Activated CD4-positive, alpha-beta T cell treated with anti-CD3 and anti-CD28 coated beads, Interleukin-2, amount 10 ng/mL, durations not matched to agents 7 days and 5 days (primary cell): ENCODE measurements at regions of chr3 and their contacts with region 1.

Region 1: GRCh38 chr3:196609343-196609775 is 30.1 kb upstream of the NRROS start:
- DNase-seq: peak; percentile 97
- H3K4me3 Mint-ChIP-seq: peak overlapping the region; percentile 60
- H3K27ac Mint-ChIP-seq: peak overlapping the region; percentile 88
- H3K4me1 Mint-ChIP-seq: peaks cover 54% of the 10 kb centered on the region
- H3K27me3 Mint-ChIP-seq: no peaks in the 10 kb centered on the region

Region 2: GRCh38 chr3:196620161-196620604 is 10.8 kb after region 1 on chr3:
- CTCF ChIA-PET with region 1: interaction called, 11 read pairs
- POLR2A ChIA-PET with region 1: no interaction called
- DNase-seq: no peak
- H3K4me3 Mint-ChIP-seq: no peak overlapping the region
- H3K27ac Mint-ChIP-seq: peak overlapping the region; percentile 83
- H3K4me1 Mint-ChIP-seq: peaks cover 57% of the 10 kb centered on the region
- H3K27me3 Mint-ChIP-seq: no peaks in the 10 kb centered on the region

Region 3: DNA sequence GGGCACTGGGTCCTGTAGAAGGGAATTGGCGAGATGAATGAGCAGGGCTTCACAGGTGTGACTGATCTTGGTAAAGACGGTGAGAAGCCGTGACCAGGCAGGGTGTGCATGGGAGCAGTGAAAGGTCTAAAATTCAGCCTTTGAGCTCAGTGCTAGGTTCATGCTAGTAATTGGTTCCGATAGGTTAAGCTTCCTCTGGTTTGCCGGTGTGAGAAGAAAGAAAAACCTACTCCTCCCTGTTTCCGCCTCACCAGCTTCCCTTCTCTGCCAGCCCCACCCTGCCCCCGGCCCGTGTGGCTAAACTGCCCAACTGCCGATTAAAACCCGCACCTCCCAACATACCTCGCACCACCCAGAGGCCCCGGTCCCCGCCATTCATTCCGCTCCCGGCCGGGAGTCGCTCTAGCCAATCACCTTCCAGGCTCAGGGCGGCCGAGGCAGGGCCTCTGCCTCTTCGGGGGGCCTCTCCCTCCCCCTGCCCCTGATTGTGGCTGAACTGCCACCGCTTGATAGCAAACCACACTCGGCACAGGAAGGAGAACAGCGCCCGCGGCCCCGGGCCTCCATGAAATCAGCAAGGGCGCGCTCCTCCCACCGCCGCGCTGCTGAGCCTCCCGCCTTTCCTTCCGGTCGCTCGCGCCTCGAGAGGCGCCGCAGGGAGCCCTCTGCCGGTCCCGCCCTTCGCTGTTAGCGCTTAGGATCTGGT is 22.8 kb after region 1 on chr3:
- CTCF ChIA-PET with region 1: interaction called, 24 read pairs
- POLR2A ChIA-PET with region 1: interaction called, 9 read pairs
- DNase-seq: peak; percentile 96
- H3K4me3 Mint-ChIP-seq: peak overlapping the region; percentile 75
- H3K27ac Mint-ChIP-seq: peak overlapping the region; percentile 97
- H3K4me1 Mint-ChIP-seq: peaks cover 73% of the 10 kb centered on the region
- H3K27me3 Mint-ChIP-seq: no peaks in the 10 kb centered on the region

Region 4: DNA sequence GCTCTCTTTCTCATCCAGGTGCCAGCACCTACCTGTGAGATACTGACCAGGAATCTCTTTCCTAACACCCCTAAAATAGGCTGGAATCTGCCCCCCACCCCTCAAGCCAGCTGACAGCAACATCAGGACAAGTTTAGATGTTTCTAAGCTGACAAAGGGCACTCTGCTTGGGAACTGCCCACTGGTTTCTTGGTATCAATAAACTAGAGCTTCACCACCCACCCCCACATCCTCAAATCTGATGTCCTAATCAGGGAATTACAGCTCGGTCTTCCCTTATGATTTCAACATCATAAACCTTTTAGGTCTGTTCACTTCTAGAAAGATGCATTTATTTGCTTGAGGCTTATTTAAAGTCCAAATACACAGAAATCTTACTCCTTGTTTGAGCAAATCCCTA is 68.0 kb after region 1 on chr3:
- CTCF ChIA-PET with region 1: interaction called, 11 read pairs
- POLR2A ChIA-PET with region 1: no interaction called
- DNase-seq: no peak
- H3K4me3 Mint-ChIP-seq: no peak overlapping the region
- H3K27ac Mint-ChIP-seq: peak overlapping the region; percentile 32
- H3K4me1 Mint-ChIP-seq: peaks cover 22% of the 10 kb centered on the region
- H3K27me3 Mint-ChIP-seq: peaks cover 2% of the 10 kb centered on the region

Region 5: DNA sequence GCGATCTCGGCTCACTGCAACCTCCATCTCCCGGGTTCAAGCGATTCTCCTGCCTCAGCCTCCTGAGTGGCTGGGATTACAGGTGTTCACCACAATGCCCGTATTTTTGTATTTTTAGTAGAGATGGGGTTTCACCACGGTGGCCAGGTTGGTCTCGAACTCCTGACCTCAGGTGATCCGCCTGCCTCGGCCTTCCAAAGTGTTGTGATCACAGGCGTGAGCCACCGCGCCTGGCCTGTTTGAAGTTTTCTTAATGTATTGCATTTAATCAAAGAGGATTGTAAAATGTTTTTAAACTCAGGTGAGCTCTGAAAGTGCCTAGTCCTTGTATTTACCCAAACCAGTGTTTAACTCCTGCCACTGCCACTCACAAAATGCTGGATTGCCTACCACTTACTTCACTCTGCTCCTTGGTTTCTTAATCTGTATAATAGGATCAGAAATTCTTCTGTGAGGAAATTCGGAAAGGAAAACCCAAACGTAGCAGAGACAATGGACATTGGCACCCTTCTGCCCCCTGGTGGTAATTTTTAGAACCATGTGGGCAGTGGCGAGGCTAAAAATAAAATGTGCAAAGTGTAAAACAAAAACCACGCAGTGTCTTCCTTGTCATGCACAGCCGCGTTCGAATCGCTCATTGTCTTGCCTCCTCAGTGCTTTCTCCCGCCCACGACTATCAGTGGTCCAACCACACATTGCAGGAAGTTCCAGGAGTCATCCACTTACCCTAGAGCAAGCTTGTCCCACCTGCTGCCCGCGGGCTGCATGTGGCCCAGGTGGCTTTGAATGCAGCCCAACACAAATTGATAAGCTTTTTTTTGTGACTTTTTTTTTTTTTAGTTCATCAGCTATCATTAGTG is 75.4 kb after region 1 on chr3:
- CTCF ChIA-PET with region 1: interaction called, 40 read pairs
- POLR2A ChIA-PET with region 1: interaction called, 3 read pairs
- DNase-seq: peak; percentile 72
- H3K4me3 Mint-ChIP-seq: peak overlapping the region; percentile 10
- H3K27ac Mint-ChIP-seq: peak overlapping the region; percentile 38
- H3K4me1 Mint-ChIP-seq: peaks cover 21% of the 10 kb centered on the region
- H3K27me3 Mint-ChIP-seq: peaks cover 2% of the 10 kb centered on the region